ENCODE measurements at regions of chrX and their contacts with region 1.

Region 1: GRCh38 chrX:16719334-16720084 is at the start of gene SYAP1:
- DNase-seq: peak; percentile 98 to 100
- ATAC-seq: peak; percentile 99
- H3K4me3 ChIP-seq: peak within 1 kb of the TSS; percentile 89 to 90
- H3K27ac ChIP-seq: peak within 1 kb of the TSS; percentile 71 to 97
- H3K4me1 ChIP-seq: peaks cover 0 to 5% of the 10 kb centered on the region in 2 donors
- H3K27me3 ChIP-seq: no peaks in the 10 kb centered on the region
- total RNA-seq, gene SYAP1: 28.3 to 36.3 TPM

Region 2: DNA sequence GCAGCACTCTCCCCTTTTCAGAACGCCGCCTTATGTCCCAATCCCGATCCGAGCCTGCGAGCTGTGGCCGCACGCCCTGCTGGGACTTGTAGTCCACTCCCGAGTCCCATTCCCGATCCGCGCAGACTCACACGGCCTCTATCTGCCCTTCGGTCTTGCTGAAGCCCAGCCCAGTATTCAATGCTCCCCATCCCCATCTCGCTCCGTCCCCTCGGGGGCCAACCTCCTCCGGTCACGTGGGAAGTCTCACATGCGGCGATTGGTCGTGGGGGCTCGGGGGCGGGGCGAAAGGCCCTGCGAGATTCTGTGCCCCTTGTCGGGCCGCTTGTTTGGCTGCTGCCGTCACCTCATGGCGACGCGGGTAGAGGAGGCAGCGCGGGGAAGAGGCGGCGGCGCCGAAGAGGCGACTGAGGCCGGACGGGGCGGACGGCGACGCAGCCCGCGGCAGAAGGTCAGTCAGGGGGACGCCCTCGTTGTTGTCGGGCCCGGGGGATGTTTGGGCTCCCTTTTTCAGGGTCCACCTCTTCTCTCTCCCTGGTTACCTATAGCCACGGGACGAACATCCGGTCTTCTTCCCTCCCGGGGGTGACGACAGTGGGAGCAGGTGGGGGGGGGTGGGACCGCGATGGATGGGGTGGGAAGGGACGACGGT is 66.8 kb after region 1 on chrX and contains the start of gene TXLNG:
- intact Hi-C with region 1: loop called in 1 of 2 experiments (anchors 2 kb)
- DNase-seq: peak; percentile 99 to 100
- ATAC-seq: peak; percentile 99
- H3K4me3 ChIP-seq: peak within 1 kb of the TSS; percentile 74 to 78
- H3K27ac ChIP-seq: peak within 1 kb of the TSS; percentile 17 to 55
- H3K4me1 ChIP-seq: no peaks in the 10 kb centered on the region
- H3K27me3 ChIP-seq: no peaks in the 10 kb centered on the region
- total RNA-seq, gene TXLNG: 9.4 to 11.8 TPM

Measured in aorta (tissue), 5 donors.